ENCODE measurements at regions of chr18 and their contacts with region 1.

Region 1: DNA sequence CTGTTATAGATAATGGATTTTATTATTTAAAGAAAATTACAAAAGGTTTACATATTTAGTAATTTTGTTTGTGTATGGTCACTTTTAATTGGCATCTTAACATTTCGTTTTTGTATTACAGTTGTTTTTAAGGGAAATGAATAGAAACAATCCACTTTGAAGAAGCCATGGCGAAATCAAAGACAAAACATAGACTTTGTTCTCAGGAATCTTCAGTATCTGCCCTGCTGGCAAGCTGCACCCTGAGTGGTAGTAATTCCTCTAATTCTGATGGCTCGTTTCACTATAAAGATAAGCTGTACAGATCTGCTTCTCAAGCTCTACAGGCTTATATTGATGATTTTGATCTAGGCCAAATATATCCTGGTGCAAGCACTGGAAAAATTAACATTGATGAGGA is 2.7 kb downstream of the C18orf54 start:
- DNase-seq: no peak

Region 2: GRCh38 chr18:53191634-53192033 is 1168.8 kb before region 1 on chr18:
- intact Hi-C with region 1: no loop called
- DNase-seq: no peak

Region 3: DNA sequence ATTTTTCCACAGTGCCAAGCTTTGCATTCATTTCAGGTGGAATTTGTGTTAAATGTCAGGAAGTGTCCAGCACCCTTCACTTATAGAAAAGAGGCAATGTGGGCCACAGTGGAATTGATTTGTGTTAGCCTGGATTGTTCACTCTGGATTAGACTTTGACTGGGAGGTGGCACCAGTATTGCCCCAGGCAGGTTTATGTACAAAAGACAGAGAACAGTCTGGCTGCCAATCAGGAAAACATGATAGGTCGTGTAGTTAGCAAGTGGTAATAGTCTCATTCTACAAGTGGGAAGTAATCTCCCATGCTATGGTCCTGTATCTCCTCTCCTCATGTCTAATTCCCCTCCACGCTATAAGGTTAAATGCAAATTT is 513.5 kb after region 1 on chr18:
- intact Hi-C with region 1: loop called in 1 of 2 experiments (anchors 5 kb)
- DNase-seq: no peak